BJ (cell line): ENCODE measurements at regions of chr1 and their contacts with region 1.

Region 1: DNA sequence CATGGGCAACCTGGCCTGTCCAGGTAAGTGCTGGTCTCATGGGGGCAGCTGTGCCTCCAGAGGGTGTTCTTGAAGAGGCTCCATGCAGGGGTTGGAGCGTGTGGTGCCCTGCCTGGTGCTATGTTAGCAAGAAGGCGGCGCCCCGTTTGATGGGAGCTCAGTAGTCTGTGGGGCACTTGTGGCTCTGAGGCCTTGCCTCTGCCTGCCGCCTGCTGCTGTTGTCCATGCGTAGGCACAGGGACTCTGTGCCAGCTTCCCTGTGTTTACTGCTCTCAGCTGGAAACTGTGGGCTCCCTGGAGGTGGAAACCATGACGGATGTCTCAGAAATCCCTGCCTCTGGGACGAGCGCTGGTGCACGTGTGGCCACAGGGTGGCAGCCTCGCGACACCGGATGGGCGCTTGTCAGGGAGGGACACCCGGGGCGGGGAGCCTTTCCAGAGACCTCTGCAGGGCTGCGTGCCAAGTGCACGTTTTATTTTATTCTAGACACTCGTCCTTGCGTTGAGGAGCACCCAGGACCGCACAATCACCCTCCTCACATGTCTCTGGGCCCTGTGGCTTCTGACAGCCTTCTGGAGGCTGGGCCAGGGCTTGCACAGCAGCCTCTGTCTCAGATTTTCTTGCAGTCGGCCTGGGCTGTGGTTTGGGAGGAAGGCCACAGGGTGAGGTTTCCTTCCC is 27.1 kb downstream of the SNAP47 start:
- DNase-seq: peak; percentile 9
- H3K4me3 ChIP-seq: no peak overlapping the region
- H3K27me3 ChIP-seq: no peaks in the 10 kb centered on the region
- CTCF ChIP-seq: peak; percentile 91

Region 2: DNA sequence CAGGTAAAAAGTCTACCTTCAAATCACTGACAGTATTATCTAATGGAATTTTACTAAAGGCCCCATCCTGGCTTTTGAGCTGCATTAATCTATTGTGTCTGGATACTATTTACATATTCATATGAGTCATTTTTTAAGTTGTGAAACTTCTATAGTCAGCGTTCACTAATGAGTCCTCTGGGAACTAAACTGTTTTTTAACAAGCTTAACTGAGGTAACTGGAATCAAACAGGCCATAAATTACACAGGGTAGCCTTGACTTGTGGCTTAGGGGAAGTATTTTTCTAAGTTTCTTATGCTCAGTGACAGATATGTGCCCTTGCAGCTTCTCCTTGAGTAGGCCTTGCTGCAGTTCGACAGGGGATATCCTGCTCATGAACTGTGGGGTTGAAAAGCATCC is 96.1 kb before region 1 on chr1:
- CTCF ChIA-PET with region 1: no interaction called
- POLR2A ChIA-PET with region 1: no interaction called
- DNase-seq: no peak
- H3K4me3 ChIP-seq: no peak overlapping the region
- H3K27me3 ChIP-seq: no peaks in the 10 kb centered on the region
- CTCF ChIP-seq: no peak

Region 3: GRCh38 chr1:227729881-227730627 is 32.3 kb before region 1 on chr1:
- CTCF ChIA-PET with region 1: interaction called, 14 read pairs
- POLR2A ChIA-PET with region 1: no interaction called
- DNase-seq: peak; percentile 6
- H3K4me3 ChIP-seq: no peak overlapping the region
- H3K27me3 ChIP-seq: no peaks in the 10 kb centered on the region
- CTCF ChIP-seq: peak; percentile 89

Region 4: DNA sequence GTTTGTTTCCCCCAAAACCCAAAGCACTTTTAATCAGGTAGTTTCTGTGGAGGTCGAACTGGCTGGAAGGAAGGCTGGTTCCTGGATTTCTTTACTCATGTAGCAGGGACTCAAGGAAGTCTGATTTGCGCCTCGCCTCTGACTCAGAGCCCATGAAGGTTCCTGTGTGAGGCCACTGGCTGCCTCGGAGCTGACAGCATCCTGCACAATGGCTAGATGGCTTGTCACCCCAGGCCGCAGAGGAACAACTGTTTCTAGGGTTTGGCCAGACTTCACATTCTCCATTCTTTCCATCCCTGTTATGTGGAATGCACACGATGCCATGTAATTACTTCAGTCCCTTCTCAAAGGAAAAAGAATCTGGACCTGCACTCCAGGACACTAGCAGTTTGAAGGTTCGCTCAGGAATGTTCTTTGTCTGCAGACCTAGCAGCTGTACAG is 14.0 kb after region 1 on chr1:
- CTCF ChIA-PET with region 1: interaction called, 20 read pairs
- POLR2A ChIA-PET with region 1: no interaction called
- DNase-seq: no peak
- H3K4me3 ChIP-seq: no peak overlapping the region
- H3K27me3 ChIP-seq: no peaks in the 10 kb centered on the region
- CTCF ChIP-seq: no peak

Region 5: GRCh38 chr1:227787513-227788270 is 25.3 kb after region 1 on chr1:
- CTCF ChIA-PET with region 1: interaction called, 10 read pairs
- POLR2A ChIA-PET with region 1: no interaction called
- DNase-seq: peak; percentile 61
- H3K4me3 ChIP-seq: peak overlapping the region; percentile 69
- H3K27me3 ChIP-seq: 0 out of 2 replicates have a peak, but pooled peaks cover 1% of the 10 kb centered on the region
- CTCF ChIP-seq: no peak

Region 6: GRCh38 chr1:227910511-227911153 is 148.3 kb after region 1 on chr1:
- CTCF ChIA-PET with region 1: interaction called, 10 read pairs
- POLR2A ChIA-PET with region 1: no interaction called
- DNase-seq: no peak
- H3K4me3 ChIP-seq: no peak overlapping the region
- H3K27me3 ChIP-seq: peaks cover 4% of the 10 kb centered on the region; the same call in 1 of the 2 replicates
- CTCF ChIP-seq: no peak

Region 7: GRCh38 chr1:227946624-227947385 is 184.4 kb after region 1 on chr1:
- CTCF ChIA-PET with region 1: interaction called, 71 read pairs
- POLR2A ChIA-PET with region 1: no interaction called
- DNase-seq: no peak
- H3K4me3 ChIP-seq: peak overlapping the region; percentile 40
- H3K27me3 ChIP-seq: no peaks in the 10 kb centered on the region
- CTCF ChIP-seq: peak; percentile 62

Region 8: DNA sequence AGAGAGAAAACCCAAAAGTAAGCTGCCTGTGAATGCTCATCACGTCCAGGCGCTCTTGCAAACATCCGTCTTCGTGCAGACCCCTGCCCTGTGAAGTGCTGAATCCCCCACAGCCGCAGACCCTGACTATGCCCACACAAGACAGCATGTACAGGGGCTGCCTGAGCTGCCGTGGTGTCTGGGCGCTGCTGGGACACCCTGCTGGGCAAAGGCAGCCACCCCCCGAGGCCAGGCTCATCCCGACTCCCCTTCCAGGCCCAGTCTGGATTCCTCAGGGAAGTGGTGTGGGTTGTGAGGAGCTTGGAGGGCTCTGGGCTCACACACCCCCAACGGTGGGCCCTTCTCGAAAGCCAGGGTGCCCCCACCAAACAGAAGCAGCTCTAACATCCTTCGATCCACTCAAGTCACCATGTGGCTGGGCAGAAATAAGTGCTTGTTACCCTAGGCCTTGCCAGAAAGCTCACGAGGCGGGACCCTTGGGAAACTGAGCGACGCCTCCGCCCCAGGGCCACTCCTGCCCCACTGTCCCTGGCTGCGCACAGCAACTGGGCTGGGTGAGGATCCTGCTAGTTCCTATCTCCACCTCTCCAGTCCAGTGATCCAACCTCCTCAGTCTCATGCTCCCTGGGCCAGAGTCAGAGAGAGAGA is 190.1 kb after region 1 on chr1:
- CTCF ChIA-PET with region 1: interaction called, 71 read pairs
- POLR2A ChIA-PET with region 1: no interaction called
- DNase-seq: no peak
- H3K4me3 ChIP-seq: no peak overlapping the region
- H3K27me3 ChIP-seq: no peaks in the 10 kb centered on the region
- CTCF ChIP-seq: no peak